Activated CD4-positive, alpha-beta memory T cell treated with anti-CD3 and anti-CD28 coated beads, Interleukin-2, amount 10 ng/mL, durations not matched to agents 7 days and 5 days (primary cell): ENCODE measurements at regions of chr9 and their contacts with region 1.

Region 1: DNA sequence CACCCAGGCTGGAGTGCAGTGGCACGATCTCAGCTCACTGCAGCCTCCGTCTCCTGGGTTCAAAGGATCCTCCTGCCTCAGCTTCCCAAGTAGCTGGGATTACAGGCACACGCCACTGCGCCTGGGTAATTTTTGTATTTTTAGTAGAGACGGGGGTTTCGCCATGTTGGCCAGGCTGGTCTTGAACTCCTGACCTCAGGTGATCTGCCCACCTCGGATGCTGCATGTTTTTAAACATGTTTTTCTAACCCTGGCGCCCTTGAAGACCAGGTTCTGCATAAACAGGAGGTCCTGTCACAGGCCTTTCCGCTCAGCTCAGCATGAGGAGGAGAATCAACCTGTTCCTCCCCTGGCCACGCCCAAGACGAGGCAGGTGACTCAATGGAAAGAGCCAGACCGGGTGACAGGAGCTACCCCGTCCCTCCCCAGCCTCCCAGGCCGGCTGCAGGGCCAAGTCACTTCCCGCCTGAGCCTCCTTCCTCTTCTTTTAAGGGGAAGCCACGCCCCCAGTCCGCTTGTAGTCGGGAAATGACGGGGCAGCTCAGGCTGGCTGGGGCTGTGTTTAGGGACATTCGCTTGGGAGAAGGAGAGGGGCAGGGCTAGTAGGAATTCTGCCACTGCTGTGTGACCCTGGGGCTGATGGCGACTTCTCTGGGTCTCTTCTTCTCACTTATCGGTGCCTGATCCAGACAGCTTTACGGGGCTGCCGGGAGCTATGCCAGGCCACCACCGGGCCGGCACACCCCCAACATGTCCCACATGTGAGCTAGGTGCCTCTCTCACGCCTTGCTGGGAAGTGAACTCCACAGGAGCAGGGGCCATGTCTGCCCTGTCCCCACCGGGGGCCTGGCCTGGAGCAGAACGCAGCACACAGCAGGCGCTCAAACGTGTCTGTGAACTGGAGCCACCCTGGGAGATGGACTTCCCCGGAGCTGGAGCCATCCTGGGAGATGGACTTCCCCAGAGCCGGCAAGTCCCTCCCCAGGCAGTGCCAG is 6.1 kb downstream of the NOTCH1 start:
- DNase-seq: peak; percentile 97
- H3K4me3 Mint-ChIP-seq: peak overlapping the region; percentile 70
- H3K27ac Mint-ChIP-seq: peak overlapping the region; percentile 99
- H3K4me1 Mint-ChIP-seq: peaks cover 76% of the 10 kb centered on the region
- H3K27me3 Mint-ChIP-seq: no peaks in the 10 kb centered on the region

Region 2: DNA sequence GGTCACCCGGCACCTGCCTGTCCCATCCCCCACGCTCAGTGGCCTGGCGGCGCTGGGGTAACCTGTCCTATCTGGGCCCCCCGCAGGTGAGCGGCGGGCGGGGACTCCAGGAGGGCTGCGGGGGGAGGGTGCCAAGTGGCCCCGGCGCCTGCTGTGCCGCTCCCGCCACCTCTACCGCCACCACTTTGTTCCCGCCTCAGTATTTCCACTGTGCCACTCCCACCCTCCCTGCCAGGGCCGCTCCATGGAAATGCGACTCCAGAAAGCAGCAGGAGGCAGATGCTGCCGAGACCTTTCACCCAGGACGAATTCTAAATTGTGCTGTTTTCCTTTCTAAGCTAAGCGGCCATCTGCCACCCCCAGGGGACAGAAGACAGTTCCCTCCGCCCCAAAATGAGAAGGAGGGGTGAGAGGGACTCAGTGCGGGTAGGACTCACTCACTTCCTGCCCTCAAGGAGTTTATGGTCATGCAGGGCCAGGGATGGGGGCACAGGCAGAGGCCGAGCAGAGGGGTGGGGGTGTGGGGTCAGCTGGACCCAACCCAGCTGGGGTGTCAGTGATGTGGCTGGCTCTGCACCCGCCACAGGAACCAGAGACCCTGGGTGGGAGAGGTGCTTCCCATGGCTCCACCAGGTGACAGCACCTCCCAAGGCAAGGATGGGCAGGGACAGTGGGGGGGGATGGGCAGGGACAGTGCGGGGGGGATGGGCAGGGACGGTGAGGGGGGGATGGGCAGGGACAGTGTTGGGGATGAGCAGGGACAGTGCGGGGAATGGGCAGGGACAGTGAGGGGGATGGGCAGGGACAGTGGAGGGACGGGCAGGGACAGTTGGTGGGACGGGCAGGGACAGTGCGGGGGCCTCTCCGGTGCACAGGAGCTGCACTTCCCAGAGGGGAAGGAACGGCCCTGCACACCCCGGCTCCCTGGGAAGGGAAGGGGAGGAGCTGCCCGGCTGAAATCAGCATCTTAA is 11.7 kb before region 1 on chr9:
- CTCF ChIA-PET with region 1: interaction called, 5 read pairs
- POLR2A ChIA-PET with region 1: interaction called, 32 read pairs
- DNase-seq: no peak
- H3K4me3 Mint-ChIP-seq: no peak overlapping the region
- H3K27ac Mint-ChIP-seq: no peak overlapping the region
- H3K4me1 Mint-ChIP-seq: peaks cover 20% of the 10 kb centered on the region
- H3K27me3 Mint-ChIP-seq: no peaks in the 10 kb centered on the region